ENCODE measurements at regions of chr3 and their contacts with region 1.

Region 1: DNA sequence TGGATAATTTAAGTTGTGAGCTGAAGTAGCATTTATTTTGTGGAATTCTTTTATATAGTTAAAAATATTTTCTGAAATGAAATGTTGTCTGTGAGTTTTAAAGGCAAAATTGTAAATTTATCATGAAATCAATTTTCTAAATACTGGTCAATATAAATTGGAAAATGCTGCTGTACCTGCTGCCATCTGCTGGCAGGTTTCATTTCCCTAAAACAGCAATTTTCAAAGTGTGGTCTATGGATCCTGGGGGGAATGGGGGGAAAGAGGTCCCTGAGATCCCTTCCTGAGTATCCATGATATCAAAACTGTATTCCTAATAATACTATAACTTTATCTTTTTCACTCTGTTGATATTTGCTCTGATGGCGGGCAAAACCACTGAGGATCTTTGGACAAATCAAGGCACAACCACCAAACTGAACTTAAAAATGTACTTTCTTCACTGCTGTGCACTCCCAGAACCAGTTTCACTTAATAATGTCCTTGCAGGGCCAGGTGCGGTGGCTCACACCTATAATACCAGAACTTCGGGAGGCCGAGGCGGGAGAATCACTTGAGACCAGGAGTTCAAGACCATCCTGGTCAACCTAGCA is 17.2 kb upstream of the CCR4 start:
- DNase-seq: no peak
- H3K4me3 ChIP-seq: no peak overlapping the region
- H3K4me3 Mint-ChIP-seq: no peak overlapping the region
- H3K27ac ChIP-seq: no peak overlapping the region
- H3K27ac Mint-ChIP-seq: no peak overlapping the region
- H3K4me1 ChIP-seq: no peaks in the 10 kb centered on the region
- H3K4me1 Mint-ChIP-seq: no peaks in the 10 kb centered on the region
- H3K27me3 ChIP-seq: no peaks in the 10 kb centered on the region
- H3K27me3 Mint-ChIP-seq: peaks cover 0 to 14% of the 10 kb centered on the region in 2 donors

Region 2: GRCh38 chr3:32781210-32781968 is 152.9 kb before region 1 on chr3:
- CTCF ChIA-PET with region 1: interaction called, 3 read pairs
- POLR2A ChIA-PET with region 1: no interaction called
- intact Hi-C with region 1: loop called (anchors 1 kb)
- DNase-seq: peak; percentile 35 to 52 (median 42)
- H3K4me3 ChIP-seq: peak overlapping the region; percentile 60 to 84
- H3K4me3 Mint-ChIP-seq: peak overlapping the region; percentile 87 to 95 (median 90)
- H3K27ac ChIP-seq: no peak overlapping the region
- H3K27ac Mint-ChIP-seq: peak overlapping the region in 3 of 7 donors; percentile 42 to 63 (median 59)
- H3K4me1 ChIP-seq: peaks cover 6% of the 10 kb centered on the region
- H3K4me1 Mint-ChIP-seq: peaks cover 2 to 13% (median 4%) of the 10 kb centered on the region in 4 donors
- H3K27me3 ChIP-seq: peaks cover 3% of the 10 kb centered on the region
- H3K27me3 Mint-ChIP-seq: peaks cover 3 to 4% of the 10 kb centered on the region in 2 donors

Region 3: DNA sequence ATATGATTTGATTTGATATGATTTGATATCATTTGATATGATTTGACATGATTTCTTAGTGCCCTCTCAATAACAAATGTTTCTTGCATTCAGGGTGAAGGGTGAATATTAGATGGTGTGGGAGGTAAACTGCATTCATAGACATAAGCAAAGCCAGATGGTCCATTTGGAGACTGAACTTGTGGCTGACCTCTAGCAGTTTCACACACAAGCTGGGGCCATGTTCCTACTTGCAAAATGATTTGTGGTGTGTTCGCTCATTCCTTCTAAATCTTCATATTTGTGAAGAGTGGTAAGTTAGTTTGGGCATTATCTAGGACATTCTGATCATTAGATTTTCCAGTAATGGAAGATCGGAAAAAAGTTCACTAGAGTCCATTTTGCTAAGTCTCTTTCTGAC is 23.3 kb before region 1 on chr3:
- CTCF ChIA-PET with region 1: no interaction called
- POLR2A ChIA-PET with region 1: no interaction called
- intact Hi-C with region 1: no loop called
- DNase-seq: no peak
- H3K4me3 ChIP-seq: no peak overlapping the region
- H3K4me3 Mint-ChIP-seq: no peak overlapping the region
- H3K27ac ChIP-seq: no peak overlapping the region
- H3K27ac Mint-ChIP-seq: no peak overlapping the region
- H3K4me1 ChIP-seq: peaks cover 10% of the 10 kb centered on the region
- H3K4me1 Mint-ChIP-seq: peaks cover 5 to 14% (median 9%) of the 10 kb centered on the region in 4 donors
- H3K27me3 ChIP-seq: no peaks in the 10 kb centered on the region
- H3K27me3 Mint-ChIP-seq: no peaks in the 10 kb centered on the region

Measured in CD4-positive, alpha-beta memory T cell (primary cell).